Colonic mucosa (tissue), 4 donors: ENCODE measurements at regions of chr2 and their contacts with region 1.

Region 1: DNA sequence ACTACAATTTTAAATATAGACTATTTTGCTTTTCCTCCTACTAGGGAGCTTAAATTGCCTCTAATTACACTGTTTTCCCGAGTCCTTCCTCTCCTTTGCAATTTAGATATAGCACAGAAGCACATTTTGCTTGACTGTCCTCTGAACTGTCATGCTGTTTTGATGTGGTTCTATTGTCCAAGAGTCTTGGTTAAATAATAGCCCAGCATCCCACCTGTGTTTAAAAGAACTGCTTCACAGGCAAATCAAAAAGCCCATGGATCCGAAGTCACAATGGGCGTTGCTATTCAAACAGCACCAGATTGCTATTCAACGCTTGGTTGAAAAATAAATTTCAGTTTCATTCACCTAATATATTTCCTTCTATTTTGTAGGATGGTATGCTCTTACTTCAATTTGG is 22.3 kb upstream of the ACTR3 start:
- DNase-seq: no peak
- H3K4me3 ChIP-seq: no peak overlapping the region
- H3K27ac ChIP-seq: no peak overlapping the region
- H3K4me1 ChIP-seq: peaks cover 5% of the 10 kb centered on the region
- H3K27me3 ChIP-seq: no peaks in the 10 kb centered on the region
- CTCF ChIP-seq: no peak

Region 2: GRCh38 chr2:113812204-113812603 is 55.4 kb before region 1 on chr2:
- intact Hi-C with region 1: loop called (anchors 5 kb)
- DNase-seq: no peak
- H3K4me3 ChIP-seq: no peak overlapping the region
- H3K27ac ChIP-seq: no peak overlapping the region
- H3K4me1 ChIP-seq: no peaks in the 10 kb centered on the region
- H3K27me3 ChIP-seq: no peaks in the 10 kb centered on the region
- CTCF ChIP-seq: no peak